ENCODE measurements at regions of chr19 and their contacts with region 1.

Region 1: DNA sequence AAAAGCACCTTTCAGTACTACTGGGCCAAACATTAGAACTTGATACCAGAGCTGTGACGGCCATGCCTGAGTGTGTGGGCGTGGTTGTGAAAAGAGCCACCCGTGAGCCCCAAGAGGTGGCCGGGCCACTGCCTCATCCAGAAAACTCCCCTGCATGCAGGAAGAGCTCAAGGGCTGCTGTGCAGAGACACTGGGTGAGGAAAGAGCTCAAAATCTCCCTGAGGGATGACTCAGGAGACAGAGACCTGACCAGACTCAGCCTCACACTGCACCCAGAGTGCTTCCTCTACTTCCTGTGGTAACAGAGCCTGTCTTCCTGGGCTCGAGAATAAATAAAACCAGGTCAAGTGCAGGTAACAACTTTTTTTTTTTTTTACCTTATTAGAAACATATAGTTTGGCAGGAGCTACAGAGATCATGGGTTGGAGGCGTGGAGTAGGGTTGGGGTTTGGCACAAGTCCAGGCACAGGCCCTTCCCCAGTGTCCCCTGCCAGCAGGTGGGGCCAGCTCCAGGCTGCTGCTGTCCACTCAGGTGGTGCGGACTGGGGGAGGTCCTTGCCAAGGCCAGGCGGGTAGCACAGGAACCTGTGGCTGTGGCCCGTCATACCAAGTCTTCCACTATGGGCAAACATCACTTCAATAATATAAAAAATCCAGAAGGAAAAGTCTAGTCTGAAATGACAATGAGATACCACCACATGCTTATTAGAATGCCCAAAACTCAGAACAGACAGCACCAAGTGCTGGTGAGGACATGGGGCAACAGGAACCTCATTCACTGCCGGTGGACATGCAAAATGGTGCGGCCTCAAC is 25.5 kb downstream of the ELL start:
- DNase-seq: no peak
- ATAC-seq: peak; percentile 92
- H3K4me3 Mint-ChIP-seq: peak overlapping the region; percentile 46
- H3K27ac Mint-ChIP-seq: peak overlapping the region; percentile 80
- H3K4me1 Mint-ChIP-seq: peaks cover 57% of the 10 kb centered on the region
- H3K27me3 Mint-ChIP-seq: no peaks in the 10 kb centered on the region

Region 2: DNA sequence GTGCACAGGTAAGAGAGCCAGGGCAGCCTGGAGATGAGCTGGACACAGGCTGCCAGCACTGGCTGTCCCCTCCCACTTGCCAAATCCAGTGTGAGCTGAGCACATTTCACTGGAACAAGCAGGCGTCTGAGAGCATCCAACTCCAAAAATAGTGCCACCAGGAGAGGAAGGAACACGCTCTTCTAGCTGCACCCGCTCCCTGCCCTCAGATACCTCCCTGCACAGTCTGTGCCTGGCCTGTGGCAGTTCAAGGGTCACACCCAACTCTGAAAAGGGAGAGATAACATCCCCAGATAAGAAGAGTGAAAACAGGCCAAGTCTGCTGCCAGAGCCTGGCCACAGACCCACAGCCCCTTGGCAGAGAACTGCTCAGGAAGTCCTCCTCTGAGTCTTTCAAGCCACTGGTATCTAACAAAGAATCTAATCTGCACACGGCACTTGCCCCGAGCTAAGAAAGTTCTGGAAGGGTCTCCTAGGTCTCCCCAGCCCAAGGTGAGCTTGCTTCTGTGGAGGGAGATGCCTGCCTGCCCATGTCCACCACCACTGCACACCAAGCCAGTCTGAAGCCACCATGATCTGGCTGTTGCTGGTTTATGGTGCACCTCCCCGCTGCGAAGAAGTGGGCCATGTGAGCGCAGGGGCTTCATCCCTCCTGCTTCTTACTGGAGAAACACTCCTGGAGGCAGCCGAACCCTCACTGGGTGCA is 10.8 kb after region 1 on chr19:
- POLR2A ChIA-PET with region 1: interaction called, 25 read pairs
- DNase-seq: no peak
- ATAC-seq: peak; percentile 69
- H3K4me3 Mint-ChIP-seq: peak overlapping the region; percentile 43
- H3K27ac Mint-ChIP-seq: peak overlapping the region; percentile 82
- H3K4me1 Mint-ChIP-seq: peaks cover 49% of the 10 kb centered on the region
- H3K27me3 Mint-ChIP-seq: no peaks in the 10 kb centered on the region

Region 3: DNA sequence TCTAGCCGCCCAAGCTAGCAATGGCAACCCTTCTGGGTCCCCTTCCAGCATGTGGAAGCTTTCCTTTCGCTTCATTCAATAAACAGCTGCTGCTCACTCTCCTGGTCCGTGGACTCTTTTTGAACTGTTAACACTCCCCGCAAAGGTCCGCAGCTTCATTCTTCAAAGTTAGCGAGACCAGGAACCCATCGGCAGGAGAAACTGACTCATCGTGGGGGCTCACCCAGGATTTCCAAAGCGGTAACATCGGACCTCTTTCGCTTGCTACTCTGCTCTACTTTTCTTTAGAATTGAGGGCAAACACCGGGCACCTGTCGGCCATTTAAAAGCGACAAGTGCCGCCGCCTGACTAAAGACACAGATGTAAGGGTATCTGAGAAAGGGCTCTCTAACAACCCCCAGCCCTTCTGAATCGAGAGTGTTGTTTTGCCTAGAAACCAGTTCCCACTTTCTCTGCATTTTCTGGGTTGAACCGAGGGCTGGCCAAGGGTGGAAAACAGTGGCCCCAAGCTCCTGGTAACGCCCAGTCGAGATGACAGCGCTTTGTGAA is 81.1 kb after region 1 on chr19:
- POLR2A ChIA-PET with region 1: no interaction called
- DNase-seq: no peak
- ATAC-seq: no peak
- H3K4me3 Mint-ChIP-seq: no peak overlapping the region
- H3K27ac Mint-ChIP-seq: no peak overlapping the region
- H3K4me1 Mint-ChIP-seq: peaks cover 12% of the 10 kb centered on the region
- H3K27me3 Mint-ChIP-seq: no peaks in the 10 kb centered on the region